Natural killer cell (primary cell): ENCODE measurements at regions of chr18 and their contacts with region 1.

Region 1: GRCh38 chr18:36129300-36130038 is at the starts of genes ELP2 and SLC39A6:
- DNase-seq: peak; percentile 96 to 99
- ATAC-seq: peak; percentile 86 to 94 (median 88)
- H3K4me3 ChIP-seq: peak within 1 kb of the TSS; percentile 90
- H3K4me3 Mint-ChIP-seq: peak within 1 kb of the TSS; percentile 95
- H3K27ac ChIP-seq: peak within 1 kb of the TSS; percentile 98
- H3K27ac Mint-ChIP-seq: peak within 1 kb of the TSS; percentile 96 to 97
- H3K4me1 ChIP-seq: peaks cover 36% of the 10 kb centered on the region
- H3K4me1 Mint-ChIP-seq: peaks cover 38 to 58% of the 10 kb centered on the region in 2 donors
- H3K27me3 ChIP-seq: no peaks in the 10 kb centered on the region
- H3K27me3 Mint-ChIP-seq: no peaks in the 10 kb centered on the region
- CTCF ChIP-seq: no peak
- total RNA-seq, gene ELP2: 119 to 135 (median 129) TPM
- total RNA-seq, gene SLC39A6: 15.2 to 18.8 (median 18.1) TPM

Region 2: GRCh38 chr18:36067055-36067957 is 62.2 kb before region 1 on chr18 and contains the start of gene RPRD1A:
- intact Hi-C with region 1: loop called (anchors 1 kb)
- DNase-seq: peak; percentile 96 to 97
- ATAC-seq: peak; percentile 88 to 94 (median 91)
- H3K4me3 ChIP-seq: peak within 1 kb of the TSS; percentile 62
- H3K4me3 Mint-ChIP-seq: peak within 1 kb of the TSS; percentile 97
- H3K27ac ChIP-seq: peak within 1 kb of the TSS; percentile 64
- H3K27ac Mint-ChIP-seq: peak within 1 kb of the TSS; percentile 88 to 98
- H3K4me1 ChIP-seq: peaks cover 4% of the 10 kb centered on the region
- H3K4me1 Mint-ChIP-seq: peaks cover 34 to 43% of the 10 kb centered on the region in 2 donors
- H3K27me3 ChIP-seq: no peaks in the 10 kb centered on the region
- H3K27me3 Mint-ChIP-seq: peaks cover 0 to 3% of the 10 kb centered on the region in 2 donors
- CTCF ChIP-seq: no peak
- total RNA-seq, gene RPRD1A: 20.4 to 24.4 (median 23.3) TPM

Region 3: GRCh38 chr18:36185157-36185556 is 55.7 kb after region 1 on chr18:
- intact Hi-C with region 1: loop called (anchors 2 kb)
- DNase-seq: no peak
- ATAC-seq: no peak
- H3K4me3 ChIP-seq: no peak overlapping the region
- H3K4me3 Mint-ChIP-seq: peak overlapping the region; percentile 6
- H3K27ac ChIP-seq: no peak overlapping the region
- H3K27ac Mint-ChIP-seq: no peak overlapping the region
- H3K4me1 ChIP-seq: peaks cover 16% of the 10 kb centered on the region
- H3K4me1 Mint-ChIP-seq: peaks cover 7 to 13% of the 10 kb centered on the region in 2 donors
- H3K27me3 ChIP-seq: peaks cover 6% of the 10 kb centered on the region
- H3K27me3 Mint-ChIP-seq: peaks cover 17 to 24% of the 10 kb centered on the region in 2 donors
- CTCF ChIP-seq: no peak